Right cardiac atrium (tissue), 5 donors: ENCODE measurements at regions of chr18 and their contacts with region 1.

Region 1: DNA sequence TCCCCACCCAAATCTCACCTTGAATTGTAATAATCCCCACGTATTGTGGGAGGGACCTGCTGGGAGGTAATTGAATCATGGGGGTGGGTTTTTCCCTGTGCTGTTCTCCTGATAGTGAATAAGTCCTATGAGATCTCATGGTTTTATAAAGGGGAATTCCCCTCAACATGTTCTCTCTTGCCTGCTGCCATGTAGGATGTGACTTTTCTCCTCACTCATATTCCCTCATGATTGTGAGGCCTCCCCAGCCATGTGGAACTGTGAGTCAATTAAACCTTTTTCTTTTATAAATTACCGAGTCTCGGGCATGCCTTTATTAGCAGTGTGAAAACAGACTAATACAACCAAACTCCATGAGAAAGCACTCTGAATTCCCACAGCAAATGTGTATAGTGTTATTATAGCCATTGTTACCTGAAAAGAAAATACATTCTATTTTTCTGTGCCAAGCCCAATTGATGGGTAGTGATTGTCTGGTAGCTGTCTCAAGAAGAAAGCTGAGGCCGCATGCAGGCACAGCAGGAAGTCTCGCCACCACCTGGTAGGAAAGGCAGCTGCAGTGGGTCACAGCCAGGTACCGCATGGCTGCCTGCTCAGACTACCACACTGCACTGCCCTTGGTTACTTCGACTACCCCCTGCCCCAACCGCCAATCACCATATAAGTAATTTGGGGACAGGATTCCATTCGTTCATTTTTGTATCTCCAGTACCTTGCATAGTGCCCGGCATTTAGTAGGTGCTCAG is 10.3 kb upstream of the ZBTB7C start:
- DNase-seq: no peak
- ATAC-seq: no peak
- H3K4me3 ChIP-seq: no peak overlapping the region
- H3K27ac ChIP-seq: no peak overlapping the region
- H3K4me1 ChIP-seq: no peaks in the 10 kb centered on the region
- H3K27me3 ChIP-seq: no peaks in the 10 kb centered on the region

Region 2: DNA sequence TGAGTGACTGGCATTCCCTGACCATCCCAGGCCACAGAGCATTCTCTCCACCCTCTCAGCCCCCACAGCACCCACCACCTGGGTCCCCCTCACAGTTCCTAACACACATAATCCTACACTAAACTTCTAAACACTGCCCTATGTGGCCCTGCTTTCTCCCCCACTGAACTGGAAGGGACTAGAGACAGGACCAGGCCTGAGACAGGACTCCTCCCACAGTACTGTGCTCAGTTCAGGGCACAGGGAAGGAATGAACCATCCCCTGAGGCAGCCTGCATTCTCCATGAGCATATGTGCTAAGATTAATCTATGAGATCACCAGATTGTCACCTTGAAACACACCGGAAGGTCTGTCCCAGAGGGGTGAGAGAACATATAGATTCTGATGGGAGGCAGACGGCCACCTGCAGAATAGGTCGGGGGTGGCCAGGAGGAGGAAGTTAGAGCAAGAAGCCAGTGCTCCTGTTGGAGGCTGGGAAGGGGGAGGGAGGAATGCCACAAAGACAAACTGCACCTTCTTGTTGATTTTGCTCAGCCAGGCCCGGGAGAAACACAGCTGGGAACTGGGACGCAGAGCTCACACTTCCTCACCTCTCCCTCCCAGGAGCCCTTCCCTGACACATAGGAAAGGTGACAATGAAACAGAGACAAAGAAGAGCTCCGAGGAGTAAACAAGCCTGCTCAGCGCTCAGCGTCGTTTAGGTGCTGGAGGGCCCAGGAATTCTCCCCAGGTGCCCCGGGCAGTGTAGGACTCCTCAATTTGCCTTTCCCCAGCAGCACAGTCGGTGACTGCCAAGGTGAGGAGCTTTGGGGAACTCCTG is 62.4 kb before region 1 on chr18:
- intact Hi-C with region 1: loop called in 1 of 4 experiments (anchors 10 kb)
- DNase-seq: no peak
- ATAC-seq: no peak
- H3K4me3 ChIP-seq: no peak overlapping the region
- H3K27ac ChIP-seq: no peak overlapping the region
- H3K4me1 ChIP-seq: no peaks in the 10 kb centered on the region
- H3K27me3 ChIP-seq: no peaks in the 10 kb centered on the region

Region 3: GRCh38 chr18:48663931-48664847 is 244.7 kb after region 1 on chr18:
- intact Hi-C with region 1: no loop called
- DNase-seq: peak; percentile 63 to 90 (median 87)
- ATAC-seq: peak; percentile 42 to 59
- H3K4me3 ChIP-seq: no peak overlapping the region
- H3K27ac ChIP-seq: no peak overlapping the region
- H3K4me1 ChIP-seq: peaks cover 8% of the 10 kb centered on the region
- H3K27me3 ChIP-seq: no peaks in the 10 kb centered on the region